Ascending aorta (tissue), 2 donors: ENCODE measurements at regions of chr16 and their contacts with region 1.

Region 1: GRCh38 chr16:67109407-67110135 is at the start of gene PHAF1:
- DNase-seq: peak; percentile 51 to 95
- H3K4me3 ChIP-seq: peak within 1 kb of the TSS; percentile 88 to 90
- H3K27ac ChIP-seq: peak within 1 kb of the TSS; percentile 81 to 87
- H3K4me1 ChIP-seq: peaks cover 10 to 13% of the 10 kb centered on the region in 2 donors
- H3K27me3 ChIP-seq: no peaks in the 10 kb centered on the region
- CTCF ChIP-seq: no peak
- total RNA-seq, gene PHAF1: 4.5 TPM

Region 2: GRCh38 chr16:66977341-66978113 is 132.0 kb before region 1 on chr16:
- intact Hi-C with region 1: loop called (anchors 5 kb)
- DNase-seq: peak; percentile 35 to 92
- H3K4me3 ChIP-seq: no peak overlapping the region
- H3K27ac ChIP-seq: no peak overlapping the region
- H3K4me1 ChIP-seq: peaks cover 0 to 7% of the 10 kb centered on the region in 2 donors
- H3K27me3 ChIP-seq: no peaks in the 10 kb centered on the region
- CTCF ChIP-seq: peak; percentile 95 to 99 (median 97)

Region 3: DNA sequence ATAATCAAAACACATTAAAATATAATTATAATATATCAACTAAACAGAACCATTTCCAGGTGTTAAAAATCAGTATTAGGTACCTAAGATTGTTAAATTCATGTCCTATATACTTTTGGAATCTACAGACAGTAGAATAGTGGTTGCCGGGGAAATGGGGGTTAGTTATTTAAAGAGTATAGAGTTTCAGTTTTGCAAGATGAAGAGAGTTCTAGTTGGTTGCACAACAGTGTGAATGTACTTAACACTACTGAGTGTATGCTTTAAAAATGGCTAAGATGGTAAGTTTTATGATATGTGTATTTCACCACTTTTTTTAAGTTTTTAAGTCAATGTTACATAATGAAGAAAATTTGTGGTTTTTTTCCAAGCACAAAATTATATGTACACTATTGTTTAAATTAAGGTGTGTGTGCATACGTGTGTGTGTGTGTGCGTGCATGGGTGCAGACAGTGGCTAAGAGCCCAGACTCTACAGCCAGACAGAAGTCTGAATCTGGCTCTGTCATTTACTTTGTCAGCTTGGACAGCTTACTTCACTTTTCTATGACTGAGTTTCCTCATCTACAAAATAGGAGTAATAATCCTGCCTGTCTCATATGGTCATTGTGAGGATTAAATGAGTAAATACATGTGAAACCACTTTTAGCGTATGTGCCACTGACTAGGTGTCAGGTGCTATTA is 25.1 kb before region 1 on chr16:
- intact Hi-C with region 1: no loop called
- DNase-seq: no peak
- H3K4me3 ChIP-seq: no peak overlapping the region
- H3K27ac ChIP-seq: no peak overlapping the region
- H3K4me1 ChIP-seq: peaks cover 0 to 2% of the 10 kb centered on the region in 2 donors
- H3K27me3 ChIP-seq: no peaks in the 10 kb centered on the region
- CTCF ChIP-seq: no peak

Region 4: DNA sequence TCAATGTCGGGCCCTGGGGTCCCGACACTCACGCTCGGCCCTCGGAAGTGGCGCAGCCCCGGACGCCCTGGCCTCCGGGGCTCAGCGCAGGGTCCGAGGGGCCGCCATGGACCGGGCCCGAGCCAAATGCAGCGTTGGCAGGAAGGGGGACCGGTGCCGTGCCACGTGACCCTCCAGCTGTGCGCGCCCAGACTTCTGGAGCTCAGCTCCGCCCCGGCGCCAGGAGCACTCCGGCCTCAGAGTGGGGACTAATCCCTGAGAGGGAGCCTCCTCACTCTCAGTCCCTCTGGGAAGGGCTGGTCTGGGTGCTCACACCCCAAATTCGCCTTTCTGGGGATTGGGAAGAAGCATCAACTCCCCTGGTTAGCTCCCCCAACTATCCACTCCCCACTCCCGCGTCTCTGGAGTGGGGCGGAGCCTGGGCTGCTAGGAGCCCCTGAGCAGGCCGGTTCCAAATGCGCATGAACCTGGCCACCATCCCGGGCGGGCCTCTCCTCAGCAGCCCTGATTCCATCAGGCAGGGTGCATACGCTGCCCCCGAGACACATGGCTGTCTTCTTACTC is 41.3 kb after region 1 on chr16 and contains the start of gene B3GNT9:
- intact Hi-C with region 1: loop called (anchors 2 kb)
- DNase-seq: peak in 1 of 2 donors; percentile 85
- H3K4me3 ChIP-seq: peak within 1 kb of the TSS; percentile 68 to 75
- H3K27ac ChIP-seq: peak within 1 kb of the TSS; percentile 88 to 89
- H3K4me1 ChIP-seq: peaks cover 6 to 19% of the 10 kb centered on the region in 2 donors
- H3K27me3 ChIP-seq: no peaks in the 10 kb centered on the region
- CTCF ChIP-seq: no peak
- total RNA-seq, gene B3GNT9: 40.7 TPM